ENCODE measurements at regions of chr3 and their contacts with region 1.

Region 1: GRCh38 chr3:146469150-146470017 is at the start of gene PLSCR2:
- DNase-seq: peak; percentile 87
- H3K4me3 ChIP-seq: peak within 1 kb of the TSS; percentile 66
- H3K27ac ChIP-seq: peak within 1 kb of the TSS; percentile 73
- H3K4me1 ChIP-seq: peaks cover 16% of the 10 kb centered on the region
- CTCF ChIP-seq: no peak
- total RNA-seq, gene PLSCR2: not detected in 2 replicates

Region 2: DNA sequence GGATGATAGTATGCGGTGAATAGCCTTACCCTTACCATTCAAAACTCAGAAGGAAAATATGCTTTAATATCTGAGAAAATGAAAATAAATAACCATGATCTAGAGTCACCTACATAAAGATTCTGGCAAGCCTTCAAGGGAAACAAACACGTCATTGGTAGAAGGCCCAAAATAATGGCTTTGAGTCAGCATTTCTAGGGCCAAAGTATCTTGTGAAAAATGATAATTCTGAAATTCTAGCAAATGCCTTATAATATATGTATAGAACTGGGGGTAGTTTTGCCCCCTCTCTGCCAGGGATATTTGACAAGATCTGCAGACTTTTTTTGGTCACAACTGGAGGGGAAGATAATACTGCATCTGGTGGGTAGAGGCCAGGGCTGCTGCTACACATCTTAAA is 59.6 kb after region 1 on chr3:
- CTCF ChIA-PET with region 1: no interaction called
- POLR2A ChIA-PET with region 1: no interaction called
- intact Hi-C with region 1: no loop called
- DNase-seq: no peak
- H3K4me3 ChIP-seq: no peak overlapping the region
- H3K27ac ChIP-seq: no peak overlapping the region
- H3K4me1 ChIP-seq: no peaks in the 10 kb centered on the region
- CTCF ChIP-seq: no peak

Region 3: GRCh38 chr3:146544002-146544928 is 74.9 kb after region 1 on chr3 and contains the start of gene PLSCR1:
- CTCF ChIA-PET with region 1: no interaction called
- POLR2A ChIA-PET with region 1: interaction called, 4 read pairs
- intact Hi-C with region 1: loop called (anchors 2 kb)
- DNase-seq: peak; percentile 78
- H3K4me3 ChIP-seq: peak within 1 kb of the TSS; percentile 74
- H3K27ac ChIP-seq: no peak within 1 kb of the TSS
- H3K4me1 ChIP-seq: no peaks in the 10 kb centered on the region
- CTCF ChIP-seq: no peak
- total RNA-seq, gene PLSCR1: 1.4 and 1.8 TPM in 2 replicates

Region 4: GRCh38 chr3:147507638-147508286 is 1038.4 kb after region 1 on chr3:
- CTCF ChIA-PET with region 1: no interaction called
- POLR2A ChIA-PET with region 1: no interaction called
- intact Hi-C with region 1: no loop called
- DNase-seq: no peak
- H3K4me3 ChIP-seq: no peak overlapping the region
- H3K27ac ChIP-seq: no peak overlapping the region
- H3K4me1 ChIP-seq: no peaks in the 10 kb centered on the region
- CTCF ChIP-seq: no peak